CD14-positive monocyte (primary cell): ENCODE measurements at regions of chr11 and their contacts with region 1.

Region 1: DNA sequence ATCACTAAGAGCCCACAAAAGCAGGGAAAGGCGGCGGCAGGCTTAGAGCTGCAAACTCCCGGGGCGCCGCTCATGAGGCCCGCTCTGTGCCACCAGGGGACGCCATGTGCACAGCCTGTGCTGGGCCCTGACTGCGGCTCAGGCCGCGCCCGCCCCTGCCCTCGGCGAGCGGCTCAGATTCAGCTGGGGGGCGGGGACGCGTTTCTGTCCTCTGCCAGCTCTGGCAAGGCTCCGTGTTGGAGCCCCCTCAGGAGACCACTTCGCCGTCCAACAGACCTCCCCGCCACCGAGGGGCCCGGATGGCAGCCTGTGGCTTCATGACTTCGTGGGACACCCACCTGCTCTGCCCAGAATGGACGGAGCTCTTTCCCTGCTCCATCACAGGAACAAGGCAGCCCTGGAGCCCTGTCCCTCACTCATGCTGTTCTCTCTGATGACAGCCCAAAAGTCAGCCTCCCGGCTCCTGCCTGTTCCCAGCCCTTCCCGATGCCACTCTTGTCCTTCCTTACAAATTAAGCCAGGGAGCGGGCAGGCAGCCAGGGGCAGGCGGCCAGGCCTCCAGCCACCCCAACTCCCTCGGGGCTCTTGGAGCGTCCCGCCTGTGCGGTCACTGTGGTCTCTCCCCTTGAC is 69.1 kb downstream of the NAT10 start:
- DNase-seq: peak; percentile 57 to 75 (median 69)
- H3K4me3 ChIP-seq: peak overlapping the region in 1 of 3 experiments; percentile 51
- H3K4me3 Mint-ChIP-seq: peak overlapping the region; percentile 74 to 91
- H3K27ac ChIP-seq: no peak overlapping the region
- H3K27ac Mint-ChIP-seq: peak overlapping the region in 1 of 7 donors; percentile 41
- H3K4me1 ChIP-seq: peaks cover 9 to 11% of the 10 kb centered on the region in 2 donors
- H3K4me1 Mint-ChIP-seq: peaks cover 11% of the 10 kb centered on the region
- H3K27me3 ChIP-seq: no peaks in the 10 kb centered on the region
- H3K27me3 Mint-ChIP-seq: peaks cover 0 to 7% (median 0%) of the 10 kb centered on the region in 3 donors
- CTCF ChIP-seq: peak; percentile 92

Region 2: DNA sequence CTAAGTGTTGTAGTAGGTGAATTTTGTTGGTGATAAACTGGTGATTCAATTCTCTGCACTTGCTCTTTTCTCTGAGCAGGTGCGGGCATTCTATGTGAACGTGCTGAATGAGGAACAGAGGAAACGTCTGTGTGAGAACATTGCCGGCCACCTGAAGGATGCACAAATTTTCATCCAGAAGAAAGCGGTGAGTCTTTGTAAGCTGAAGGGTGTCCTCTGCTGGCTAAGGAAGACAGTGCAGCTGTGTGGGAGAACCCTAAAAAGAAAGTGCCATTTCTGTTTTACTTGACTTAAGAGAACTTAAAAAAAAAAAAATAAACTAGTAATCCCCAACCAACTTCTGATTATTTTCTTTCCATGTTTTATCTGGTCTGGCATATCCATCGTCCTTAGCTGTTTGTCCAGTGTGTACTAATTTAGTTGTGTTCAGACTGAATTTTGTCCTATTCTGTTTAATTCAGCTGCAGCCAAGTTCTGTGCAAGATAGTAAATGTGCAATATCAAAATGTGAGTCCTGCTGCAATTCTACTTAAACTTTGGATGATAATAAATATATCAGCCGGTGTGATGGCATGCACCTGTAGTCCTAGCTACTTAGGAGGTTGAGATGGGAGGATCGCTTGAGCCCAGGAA is 293.8 kb after region 1 on chr11:
- intact Hi-C with region 1: loop called (anchors 5 to 10 kb)
- DNase-seq: peak; percentile 33 to 46 (median 43)
- H3K4me3 ChIP-seq: no peak overlapping the region
- H3K4me3 Mint-ChIP-seq: no peak overlapping the region
- H3K27ac ChIP-seq: no peak overlapping the region
- H3K27ac Mint-ChIP-seq: peak overlapping the region in 1 of 7 donors; percentile 30
- H3K4me1 ChIP-seq: peaks cover 0 to 10% of the 10 kb centered on the region in 2 donors
- H3K4me1 Mint-ChIP-seq: peaks cover 7% of the 10 kb centered on the region
- H3K27me3 ChIP-seq: no peaks in the 10 kb centered on the region
- H3K27me3 Mint-ChIP-seq: no peaks in the 10 kb centered on the region
- CTCF ChIP-seq: peak; percentile 91

Region 3: GRCh38 chr11:34492806-34493414 is 318.4 kb after region 1 on chr11:
- intact Hi-C with region 1: loop called in 1 of 2 experiments (anchors 10 kb)
- DNase-seq: peak; percentile 54 to 70 (median 54)
- H3K4me3 ChIP-seq: no peak overlapping the region
- H3K4me3 Mint-ChIP-seq: no peak overlapping the region
- H3K27ac ChIP-seq: no peak overlapping the region
- H3K27ac Mint-ChIP-seq: no peak overlapping the region
- H3K4me1 ChIP-seq: no peaks in the 10 kb centered on the region
- H3K4me1 Mint-ChIP-seq: peaks cover 4% of the 10 kb centered on the region
- H3K27me3 ChIP-seq: no peaks in the 10 kb centered on the region
- H3K27me3 Mint-ChIP-seq: peaks cover 0 to 1% (median under 1%) of the 10 kb centered on the region in 3 donors
- CTCF ChIP-seq: peak; percentile 80